ENCODE measurements at regions of chr1 and their contacts with region 1.

Region 1: GRCh38 chr1:225845571-225846259 is 35.8 kb downstream of the EPHX1 start:
- DNase-seq: peak; percentile 82 to 87 (median 85)
- H3K4me3 ChIP-seq: no peak overlapping the region
- H3K27ac ChIP-seq: peak overlapping the region; percentile 9 to 50
- H3K4me1 ChIP-seq: peaks cover 12% of the 10 kb centered on the region
- H3K27me3 ChIP-seq: no peaks in the 10 kb centered on the region
- CTCF ChIP-seq: peak; percentile 74 to 87 (median 84)
- EP300 ChIP-seq: no peak
- POLR2A ChIP-seq: peak; percentile 13

Region 2: GRCh38 chr1:225794954-225795353 is 50.8 kb before region 1 on chr1:
- intact Hi-C with region 1: no loop called
- DNase-seq: no peak
- H3K4me3 ChIP-seq: no peak overlapping the region
- H3K27ac ChIP-seq: no peak overlapping the region
- H3K4me1 ChIP-seq: no peaks in the 10 kb centered on the region
- H3K27me3 ChIP-seq: no peaks in the 10 kb centered on the region
- CTCF ChIP-seq: no peak
- EP300 ChIP-seq: no peak
- POLR2A ChIP-seq: no peak

Region 3: GRCh38 chr1:225809842-225810578 is 35.7 kb before region 1 on chr1 and contains the start of gene EPHX1:
- intact Hi-C with region 1: loop called in 1 of 4 experiments (anchors 5 kb)
- DNase-seq: peak; percentile 89 to 93 (median 90)
- H3K4me3 ChIP-seq: peak within 1 kb of the TSS; percentile 57
- H3K27ac ChIP-seq: peak within 1 kb of the TSS; percentile 68 to 89
- H3K4me1 ChIP-seq: peaks cover 23% of the 10 kb centered on the region
- H3K27me3 ChIP-seq: no peaks in the 10 kb centered on the region
- CTCF ChIP-seq: peak in 2 of 3 donors; percentile 21 to 57
- EP300 ChIP-seq: no peak
- POLR2A ChIP-seq: peak; percentile 66
- total RNA-seq, gene EPHX1: 213 to 462 (median 302) TPM

Region 4: DNA sequence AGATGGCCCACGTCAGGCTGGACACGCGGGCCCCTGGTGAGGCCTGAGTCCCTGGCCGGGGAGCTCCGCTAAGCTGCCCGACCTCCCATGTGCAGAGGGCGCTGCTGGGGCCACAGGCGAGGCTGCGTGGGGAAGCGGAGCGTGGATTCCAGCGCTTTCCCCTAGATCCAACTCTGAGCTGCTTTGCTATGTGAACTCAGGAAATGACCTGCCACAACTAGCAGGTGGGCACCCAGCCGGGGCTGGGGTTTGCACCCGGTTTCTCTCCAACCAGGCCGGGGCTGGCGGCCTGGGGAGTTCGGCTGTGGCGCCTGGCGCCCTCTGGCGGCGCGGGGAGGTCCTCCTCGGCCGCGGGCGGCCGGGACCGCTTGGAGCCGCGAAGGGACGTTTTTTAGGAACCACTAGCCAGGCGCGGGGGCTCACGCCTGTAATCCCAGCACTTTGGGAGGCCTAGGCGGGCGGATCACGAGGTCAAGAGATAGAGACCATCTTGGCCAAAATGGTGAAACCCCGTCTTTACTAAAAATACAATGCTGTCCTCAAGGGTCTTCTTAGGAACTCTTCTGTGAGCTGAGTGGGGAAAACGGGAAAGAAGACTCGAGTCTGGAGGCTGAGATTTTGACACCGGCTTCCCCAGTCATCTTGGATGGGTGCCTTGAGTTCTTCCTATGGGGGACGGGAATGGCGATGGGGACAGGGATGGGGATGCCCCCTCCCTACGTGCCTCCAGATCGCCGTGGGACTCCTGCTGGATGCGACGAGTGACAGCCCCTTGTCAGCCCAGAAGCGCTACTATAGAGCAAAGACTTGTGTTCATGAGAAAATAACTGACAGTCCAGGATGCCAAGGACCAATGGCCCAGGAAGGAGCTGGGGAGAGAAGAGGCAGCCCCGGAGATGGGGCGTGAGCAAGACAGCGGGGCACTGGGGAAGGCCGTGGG is 65.7 kb after region 1 on chr1:
- intact Hi-C with region 1: no loop called
- DNase-seq: peak; percentile 61 to 86 (median 80)
- H3K4me3 ChIP-seq: no peak overlapping the region
- H3K27ac ChIP-seq: no peak overlapping the region
- H3K4me1 ChIP-seq: peaks cover 2% of the 10 kb centered on the region
- H3K27me3 ChIP-seq: no peaks in the 10 kb centered on the region
- CTCF ChIP-seq: peak; percentile 83 to 87 (median 85)
- EP300 ChIP-seq: no peak
- POLR2A ChIP-seq: no peak